ENCODE measurements at regions of chr2 and their contacts with region 1.

Region 1: DNA sequence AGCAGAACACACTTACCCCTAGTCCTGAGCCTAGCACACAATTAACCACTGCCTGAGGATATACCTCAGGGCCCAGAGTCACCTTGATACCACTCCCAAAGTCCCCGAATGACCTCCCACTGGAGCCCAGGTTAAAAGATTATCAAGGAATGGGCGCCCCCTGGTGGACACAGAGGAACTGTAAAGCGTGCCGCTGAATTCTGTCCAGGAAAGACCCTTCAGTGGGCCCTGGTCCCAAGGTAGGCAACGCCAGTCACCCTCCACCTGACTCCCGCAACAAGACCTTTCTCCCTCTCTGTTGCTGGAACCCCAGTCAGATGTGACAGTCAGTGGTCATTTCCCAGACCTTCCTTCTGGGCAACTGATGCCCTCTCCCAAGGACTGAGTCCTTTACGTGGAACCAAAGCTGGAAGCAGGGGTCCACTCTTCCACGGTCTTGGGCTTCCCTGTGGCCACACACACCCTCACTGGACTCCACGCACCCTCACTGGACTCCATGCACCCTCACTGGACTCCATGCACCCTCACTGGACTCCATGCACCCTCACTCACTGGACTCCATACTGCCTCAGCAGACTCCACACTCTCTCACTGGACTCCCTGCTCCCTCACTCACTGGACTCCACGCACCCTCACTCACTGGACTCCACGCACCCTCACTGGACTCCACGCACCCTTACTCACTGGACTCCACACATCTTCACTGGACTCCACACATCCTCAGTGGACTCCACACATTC is 7.1 kb downstream of the PTMA start:
- DNase-seq: peak; percentile 68
- H3K4me3 ChIP-seq: no peak overlapping the region
- H3K27ac ChIP-seq: peak overlapping the region; percentile 47; the same call in 1 of the 2 replicates
- H3K4me1 ChIP-seq: peaks cover 38% of the 10 kb centered on the region
- H3K27me3 ChIP-seq: no peaks in the 10 kb centered on the region

Region 2: GRCh38 chr2:231674587-231675338 is 40.7 kb before region 1 on chr2:
- in situ Hi-C with region 1: loop called (anchors 5 kb)
- DNase-seq: peak; percentile 73
- H3K4me3 ChIP-seq: no peak overlapping the region
- H3K27ac ChIP-seq: no peak overlapping the region
- H3K4me1 ChIP-seq: no peaks in the 10 kb centered on the region
- H3K27me3 ChIP-seq: no peaks in the 10 kb centered on the region

Region 3: GRCh38 chr2:231819447-231820042 is 104.1 kb after region 1 on chr2:
- in situ Hi-C with region 1: no loop called
- DNase-seq: no peak
- H3K4me3 ChIP-seq: no peak overlapping the region
- H3K27ac ChIP-seq: no peak overlapping the region
- H3K4me1 ChIP-seq: no peaks in the 10 kb centered on the region
- H3K27me3 ChIP-seq: no peaks in the 10 kb centered on the region; the same call in 1 of the 2 replicates

Region 4: DNA sequence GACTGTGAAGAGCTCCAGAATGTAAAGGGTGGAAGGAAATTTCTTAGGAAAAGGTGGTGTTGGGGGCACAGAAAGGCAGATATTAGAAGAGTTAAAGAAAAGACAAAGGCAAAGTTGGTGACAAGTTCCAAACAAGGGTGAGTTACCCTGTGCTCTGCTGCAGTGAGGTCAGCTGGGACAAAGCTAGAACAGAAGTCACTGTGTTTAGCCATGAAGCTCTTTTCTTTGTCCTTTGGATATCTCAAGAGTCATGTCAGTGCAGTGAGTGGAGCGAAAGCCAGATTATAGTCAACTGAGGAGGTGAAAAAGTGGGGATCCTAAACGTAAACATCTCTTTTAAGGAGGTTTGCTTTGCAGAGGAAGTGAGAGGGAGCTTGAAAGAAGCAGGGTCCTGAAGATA is 475.4 kb after region 1 on chr2:
- in situ Hi-C with region 1: no loop called
- DNase-seq: no peak
- H3K4me3 ChIP-seq: no peak overlapping the region
- H3K27ac ChIP-seq: no peak overlapping the region
- H3K4me1 ChIP-seq: no peaks in the 10 kb centered on the region
- H3K27me3 ChIP-seq: no peaks in the 10 kb centered on the region

Measured in GM23248 (cell line).